ENCODE measurements at regions of chr17 and their contacts with region 1.

Region 1: DNA sequence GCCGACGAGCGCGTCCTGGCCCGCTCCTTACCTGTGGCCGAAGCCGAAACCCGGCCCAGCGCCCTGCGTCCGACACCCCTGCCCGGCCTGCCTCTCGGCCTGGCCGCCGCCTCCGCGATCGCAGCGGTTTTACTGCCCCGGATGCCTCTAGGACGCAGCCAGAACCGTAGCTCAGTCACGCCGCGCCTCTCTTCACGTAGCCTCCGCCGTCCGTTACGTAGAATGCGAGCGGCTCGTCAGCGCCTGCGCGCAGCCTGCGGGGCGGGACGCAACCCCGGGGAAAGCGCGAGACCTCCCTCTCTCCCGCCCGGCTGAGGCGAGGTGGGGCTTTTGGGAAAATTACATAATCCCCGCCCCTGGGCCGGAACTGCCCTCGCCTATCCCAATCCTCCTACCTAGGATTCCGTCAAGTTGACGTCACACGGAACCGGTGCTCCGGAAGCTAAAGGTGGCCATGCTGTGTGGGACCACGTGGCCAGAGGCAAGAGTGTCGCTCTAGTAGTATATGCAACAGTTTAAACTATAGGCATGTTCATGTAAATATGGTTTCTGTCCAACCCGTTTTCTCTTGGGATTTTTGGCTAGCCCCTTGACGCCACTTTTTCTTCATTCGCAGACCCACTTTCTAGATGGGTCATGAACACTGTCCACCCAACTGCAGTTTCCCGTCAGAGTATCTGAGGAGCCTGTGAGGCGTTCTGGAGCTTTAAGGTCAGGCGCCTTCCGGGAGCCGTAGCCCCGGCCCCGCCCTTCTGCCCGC is at the start of gene CCDC47:
- DNase-seq: peak; percentile 99

Region 2: GRCh38 chr17:63741221-63742049 is 32.1 kb before region 1 on chr17 and contains the start of gene STRADA:
- CTCF ChIA-PET with region 1: interaction called, 4 read pairs
- POLR2A ChIA-PET with region 1: interaction called, 26 read pairs
- DNase-seq: peak; percentile 97

Region 3: GRCh38 chr17:63760771-63761539 is 12.6 kb before region 1 on chr17:
- CTCF ChIA-PET with region 1: no interaction called
- POLR2A ChIA-PET with region 1: interaction called, 24 read pairs
- DNase-seq: no peak

Region 4: DNA sequence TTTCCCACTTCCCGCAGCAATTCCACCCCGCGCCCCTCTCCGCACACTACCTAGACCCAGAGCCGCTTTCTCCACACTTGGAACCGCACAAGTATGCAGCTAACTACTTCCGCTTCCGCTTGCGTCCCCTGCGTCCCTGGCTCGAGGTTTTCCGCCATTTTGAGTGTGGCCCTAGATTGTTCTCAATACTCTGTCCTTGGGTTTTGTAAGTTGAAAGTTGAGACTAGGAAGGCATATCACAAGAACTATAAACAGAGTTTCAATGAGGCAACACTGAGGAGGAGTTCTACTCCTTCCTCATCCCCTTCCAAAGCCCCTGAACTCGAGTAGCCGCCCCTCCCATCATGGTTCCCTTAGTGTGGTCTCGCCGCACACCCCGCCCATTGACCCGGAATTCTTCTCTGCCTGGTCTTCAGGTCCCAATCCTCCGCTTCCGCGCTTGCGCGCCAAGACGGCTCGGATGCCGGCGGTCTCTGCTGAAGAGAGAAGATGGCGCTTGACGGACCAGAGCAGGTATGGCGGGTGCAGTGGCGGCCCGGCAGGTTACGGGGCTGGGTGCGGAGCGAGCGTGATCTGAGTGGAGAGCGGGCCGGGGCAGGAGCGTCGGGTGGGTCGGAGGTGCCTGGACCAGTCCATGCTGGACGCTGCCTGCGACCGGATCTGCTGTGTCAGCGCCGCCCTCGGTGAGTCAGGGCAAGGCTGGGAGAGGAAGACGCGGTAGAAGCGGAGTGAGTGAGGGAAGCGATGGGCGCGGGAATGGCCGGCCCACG is 53.6 kb after region 1 on chr17 and contains the starts of genes FTSJ3 and PSMC5:
- CTCF ChIA-PET with region 1: no interaction called
- POLR2A ChIA-PET with region 1: interaction called, 52 read pairs
- DNase-seq: peak; percentile 92

Region 5: GRCh38 chr17:63876855-63877254 is 103.3 kb after region 1 on chr17:
- CTCF ChIA-PET with region 1: no interaction called
- POLR2A ChIA-PET with region 1: no interaction called
- DNase-seq: no peak

Measured in HEK293T (cell line).